Ovary (tissue), 10 donors: ENCODE measurements at regions of chr14 and their contacts with region 1.

Region 1: DNA sequence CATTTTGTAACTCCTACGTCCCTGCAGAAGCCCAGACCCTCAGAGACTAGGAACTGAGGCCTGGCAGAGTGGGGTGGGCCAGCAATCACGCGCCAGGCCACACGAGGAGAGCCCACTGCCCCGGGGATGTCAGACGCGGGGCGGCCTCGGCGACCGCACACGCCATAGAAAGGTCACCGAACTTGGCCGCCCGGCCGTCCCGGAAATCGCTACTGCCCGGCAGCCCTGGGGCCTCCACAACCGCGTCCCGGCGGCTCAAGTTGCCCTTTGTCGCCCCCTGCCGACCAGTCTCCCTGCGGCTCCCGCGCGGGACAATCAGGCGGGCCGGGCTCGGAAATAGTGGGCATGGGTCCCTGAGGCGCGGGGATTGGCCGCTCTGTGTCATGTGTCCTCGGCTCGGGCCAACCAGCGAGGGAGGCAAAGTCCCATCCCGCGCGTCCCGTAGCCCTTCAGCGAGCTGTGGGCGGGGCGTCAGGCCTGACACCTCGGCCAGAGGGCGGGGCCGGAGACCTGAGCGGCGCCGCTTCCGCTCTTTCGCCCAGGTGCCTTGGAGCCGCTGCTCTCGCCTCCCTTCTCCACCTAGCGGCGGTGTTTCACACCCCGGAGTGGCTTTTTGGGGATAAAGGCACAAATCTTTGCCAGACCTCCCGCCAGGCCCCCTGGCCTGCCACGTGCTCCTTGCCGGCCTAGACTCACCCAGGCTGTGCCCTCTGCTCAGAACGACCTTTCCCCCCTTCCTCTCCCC is 33.4 kb upstream of the DEGS2 start:
- DNase-seq: peak; percentile 99 to 100 (median 99)
- H3K4me3 ChIP-seq: peak overlapping the region; percentile 38
- H3K27ac ChIP-seq: peak overlapping the region; percentile 78 to 88
- H3K4me1 ChIP-seq: no peaks in the 10 kb centered on the region
- H3K27me3 ChIP-seq: no peaks in the 10 kb centered on the region
- CTCF ChIP-seq: peak; percentile 92 to 97 (median 93)
- EP300 ChIP-seq: no peak
- POLR2A ChIP-seq: peak; percentile 47

Region 2: GRCh38 chr14:99971087-99971940 is 221.5 kb before region 1 on chr14:
- intact Hi-C with region 1: loop called in 2 of 4 experiments (anchors 10 kb)
- DNase-seq: peak; percentile 78 to 86 (median 84)
- H3K4me3 ChIP-seq: peak overlapping the region; percentile 93
- H3K27ac ChIP-seq: peak overlapping the region; percentile 53 to 77
- H3K4me1 ChIP-seq: peaks cover 4% of the 10 kb centered on the region
- H3K27me3 ChIP-seq: no peaks in the 10 kb centered on the region
- CTCF ChIP-seq: no peak
- EP300 ChIP-seq: no peak
- POLR2A ChIP-seq: peak; percentile 29